Cardiac septum (tissue), 1 donor: ENCODE measurements at regions of chr1 and their contacts with region 1.

Region 1: GRCh38 chr1:7516341-7516740 is 254.8 kb upstream of the VAMP3 start:
- DNase-seq: no peak

Region 2: GRCh38 chr1:7366955-7367665 is 149.2 kb before region 1 on chr1:
- intact Hi-C with region 1: loop called (anchors 5 kb)
- DNase-seq: no peak

Region 3: DNA sequence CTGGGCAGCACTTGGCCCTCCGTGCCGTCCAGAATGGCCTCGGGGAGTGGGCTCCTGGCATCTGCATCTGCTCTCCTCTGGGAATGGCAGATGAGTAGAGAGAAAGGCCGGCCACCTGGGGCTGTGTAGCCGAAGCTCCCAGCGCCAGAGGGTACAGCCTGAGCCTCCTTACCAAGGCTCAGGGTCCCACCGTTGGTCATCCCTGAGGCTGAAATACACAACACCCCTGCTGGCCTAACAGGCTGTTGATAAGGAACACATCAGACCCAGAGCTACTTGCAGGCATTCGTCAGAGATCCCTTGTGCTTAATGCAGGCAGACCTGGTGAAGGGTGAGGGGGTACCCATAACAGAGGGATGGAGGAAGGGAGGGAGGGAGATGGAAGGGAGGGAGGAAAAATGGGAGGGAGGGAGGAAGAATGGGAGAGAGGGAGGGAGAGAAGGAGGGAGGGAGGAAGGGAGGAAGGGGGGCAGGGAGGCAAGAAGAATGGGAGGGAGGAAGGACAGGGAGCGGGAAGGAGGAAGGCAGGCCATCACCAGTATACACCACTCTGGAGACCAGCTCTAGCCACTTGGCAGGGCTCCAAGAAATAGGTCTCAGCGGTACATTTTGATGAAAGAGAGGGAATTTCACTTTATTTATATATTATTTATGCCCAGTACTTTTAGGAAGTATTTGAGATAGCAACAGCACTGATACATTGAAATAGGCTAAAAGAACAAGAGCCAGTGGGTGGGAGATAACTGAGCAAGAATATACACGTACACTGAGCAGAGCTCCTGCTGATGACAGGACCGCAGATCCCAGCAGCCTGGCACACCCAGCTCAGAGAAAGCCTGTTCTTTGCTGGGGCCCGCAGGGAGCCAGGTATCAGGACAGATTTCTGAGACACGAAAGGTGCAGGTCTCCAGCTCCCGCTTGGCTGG is 60.3 kb before region 1 on chr1:
- intact Hi-C with region 1: no loop called
- DNase-seq: no peak

Region 4: GRCh38 chr1:7469255-7469938 is 46.9 kb before region 1 on chr1:
- intact Hi-C with region 1: no loop called
- DNase-seq: no peak